ENCODE measurements at regions of chr1 and their contacts with region 1.

Region 1: GRCh38 chr1:201559679-201560162 is 20.8 kb downstream of the NAV1 start:
- DNase-seq: peak; percentile 82

Region 2: GRCh38 chr1:201649761-201650622 is 90.3 kb after region 1 on chr1:
- in situ Hi-C with region 1: loop called (anchors 25 kb)
- DNase-seq: no peak